Activated naive CD4-positive, alpha-beta T cell treated with anti-CD3 and anti-CD28 coated beads for 36 hours (primary cell): ENCODE measurements at regions of chr1 and their contacts with region 1.

Region 1: DNA sequence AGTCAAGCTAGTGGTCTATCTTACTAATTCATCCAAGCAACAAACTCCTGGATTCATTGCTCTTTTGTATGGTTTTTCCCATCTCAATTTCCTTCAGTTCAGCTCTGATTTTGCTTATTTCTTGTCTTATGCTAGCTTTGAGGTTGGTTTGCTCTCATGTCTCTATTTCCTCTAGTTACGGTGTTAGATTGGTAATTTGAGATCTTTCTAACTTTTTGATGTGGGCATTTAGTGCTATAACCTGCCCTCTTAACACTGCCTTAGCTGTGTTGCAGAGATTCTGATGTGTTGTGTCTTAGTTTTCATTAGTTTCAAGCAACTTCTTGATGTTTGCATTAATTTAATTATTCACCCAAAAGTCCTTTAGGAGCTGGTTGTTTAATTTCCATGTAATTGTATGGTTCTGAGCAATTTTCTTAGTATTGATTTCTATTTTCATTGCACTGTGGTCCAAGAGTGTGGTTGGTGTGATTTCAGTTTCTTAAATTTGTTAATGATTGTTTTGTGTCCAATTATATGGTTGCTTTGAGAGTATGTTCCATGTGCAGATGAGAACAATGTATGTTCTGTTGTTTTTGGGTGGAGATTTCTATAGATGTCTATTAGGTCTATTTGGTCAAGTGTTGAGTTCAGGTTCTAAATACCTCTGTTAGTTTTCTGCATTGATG is 154.6 kb downstream of the PLPPR5 start:
- DNase-seq: no peak
- H3K4me3 Mint-ChIP-seq: no peak overlapping the region
- H3K27ac Mint-ChIP-seq: no peak overlapping the region
- H3K4me1 Mint-ChIP-seq: peaks cover 18% of the 10 kb centered on the region
- H3K27me3 Mint-ChIP-seq: no peaks in the 10 kb centered on the region

Region 2: DNA sequence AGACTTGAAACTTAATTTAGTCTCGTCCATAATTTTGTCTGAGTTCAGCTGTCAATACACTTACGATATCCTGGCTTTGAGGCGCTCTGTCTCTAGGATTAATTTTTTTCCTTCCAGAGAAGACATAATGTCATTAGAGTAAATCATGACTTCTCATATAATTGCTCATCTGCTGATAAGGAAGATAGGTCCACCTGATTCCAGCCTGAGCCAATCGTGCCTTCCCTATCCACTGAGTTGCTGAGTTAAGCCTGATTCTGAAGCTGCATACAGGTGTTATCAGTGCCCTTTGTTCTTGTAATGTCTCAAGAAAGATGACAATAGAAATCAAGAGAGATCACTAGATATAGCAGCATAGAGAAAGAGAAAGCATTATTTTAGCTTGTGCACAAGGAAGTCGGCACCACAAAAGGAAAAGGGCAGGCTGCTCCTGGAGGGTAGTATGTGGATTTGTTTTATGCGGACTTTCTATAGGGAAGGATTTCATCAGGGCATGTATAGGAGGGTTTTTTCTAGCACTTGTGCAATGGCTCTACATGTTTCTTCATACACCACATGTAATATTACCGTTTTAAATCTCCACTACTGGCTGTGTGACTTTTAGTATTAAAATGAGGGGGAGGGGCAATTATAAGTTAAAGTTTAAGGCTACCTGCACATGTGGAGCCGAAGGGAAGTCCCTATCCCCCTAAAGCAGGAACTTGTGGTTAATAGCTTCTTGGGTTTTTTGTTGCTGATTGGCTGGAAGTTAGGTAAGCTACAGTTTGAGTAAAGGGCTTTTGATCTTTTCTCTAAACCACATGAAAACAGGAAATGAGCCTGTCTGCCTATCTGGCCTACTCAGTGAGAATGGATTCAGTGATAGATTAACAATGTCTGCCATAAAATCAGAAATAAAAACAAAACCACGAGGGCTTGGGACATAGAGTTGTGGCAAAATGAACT is 21.1 kb after region 1 on chr1:
- CTCF ChIA-PET with region 1: no interaction called
- intact Hi-C with region 1: loop called (anchors 1 kb)
- DNase-seq: peak; percentile 60
- H3K4me3 Mint-ChIP-seq: peak overlapping the region; percentile 68
- H3K27ac Mint-ChIP-seq: peak overlapping the region; percentile 97
- H3K4me1 Mint-ChIP-seq: peaks cover 23% of the 10 kb centered on the region
- H3K27me3 Mint-ChIP-seq: no peaks in the 10 kb centered on the region

Region 3: DNA sequence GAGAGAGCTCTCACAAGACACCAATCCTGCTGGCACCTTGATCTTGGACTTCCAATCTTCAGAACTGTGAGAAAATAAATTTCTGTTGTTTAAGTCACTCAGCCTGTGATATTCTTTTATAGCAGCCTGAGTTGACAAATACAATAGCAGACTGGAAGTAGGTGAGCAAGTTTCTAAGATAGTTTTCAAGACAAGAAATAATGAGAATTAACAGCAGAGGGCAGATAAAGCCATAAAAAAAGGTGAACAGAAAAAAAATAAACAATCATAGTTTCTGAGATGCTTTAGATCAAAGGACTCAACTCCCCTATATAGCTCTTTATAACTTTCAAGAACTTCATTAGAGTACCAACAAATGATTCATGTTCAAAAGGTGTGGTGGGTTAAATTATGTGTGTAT is 34.8 kb after region 1 on chr1:
- CTCF ChIA-PET with region 1: no interaction called
- intact Hi-C with region 1: loop called (anchors 5 kb)
- DNase-seq: no peak
- H3K4me3 Mint-ChIP-seq: no peak overlapping the region
- H3K27ac Mint-ChIP-seq: no peak overlapping the region
- H3K4me1 Mint-ChIP-seq: peaks cover 7% of the 10 kb centered on the region
- H3K27me3 Mint-ChIP-seq: no peaks in the 10 kb centered on the region

Region 4: DNA sequence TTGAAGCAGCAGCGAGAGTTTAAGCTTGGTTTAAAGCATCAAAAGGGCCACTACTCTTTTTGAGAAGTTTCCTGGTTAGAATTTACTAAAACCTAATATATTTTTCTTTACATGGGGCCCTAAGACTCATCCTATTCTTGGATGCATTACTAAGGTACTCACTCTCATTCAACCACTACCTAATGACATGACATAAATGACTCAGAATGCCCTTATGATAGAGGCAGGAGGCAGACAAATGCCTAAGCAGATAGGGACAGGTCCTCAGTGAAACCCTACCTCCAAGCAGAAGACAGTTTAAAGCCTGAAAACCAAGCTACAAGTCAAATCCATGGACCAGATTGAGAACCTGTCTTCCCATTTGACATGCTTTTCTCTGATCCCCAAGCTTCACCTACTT is 1085.4 kb after region 1 on chr1:
- CTCF ChIA-PET with region 1: no interaction called
- intact Hi-C with region 1: no loop called
- DNase-seq: no peak
- H3K4me3 Mint-ChIP-seq: no peak overlapping the region
- H3K27ac Mint-ChIP-seq: no peak overlapping the region
- H3K4me1 Mint-ChIP-seq: no peaks in the 10 kb centered on the region
- H3K27me3 Mint-ChIP-seq: peaks cover 2% of the 10 kb centered on the region